ENCODE measurements at regions of chr18 and their contacts with region 1.

Region 1: DNA sequence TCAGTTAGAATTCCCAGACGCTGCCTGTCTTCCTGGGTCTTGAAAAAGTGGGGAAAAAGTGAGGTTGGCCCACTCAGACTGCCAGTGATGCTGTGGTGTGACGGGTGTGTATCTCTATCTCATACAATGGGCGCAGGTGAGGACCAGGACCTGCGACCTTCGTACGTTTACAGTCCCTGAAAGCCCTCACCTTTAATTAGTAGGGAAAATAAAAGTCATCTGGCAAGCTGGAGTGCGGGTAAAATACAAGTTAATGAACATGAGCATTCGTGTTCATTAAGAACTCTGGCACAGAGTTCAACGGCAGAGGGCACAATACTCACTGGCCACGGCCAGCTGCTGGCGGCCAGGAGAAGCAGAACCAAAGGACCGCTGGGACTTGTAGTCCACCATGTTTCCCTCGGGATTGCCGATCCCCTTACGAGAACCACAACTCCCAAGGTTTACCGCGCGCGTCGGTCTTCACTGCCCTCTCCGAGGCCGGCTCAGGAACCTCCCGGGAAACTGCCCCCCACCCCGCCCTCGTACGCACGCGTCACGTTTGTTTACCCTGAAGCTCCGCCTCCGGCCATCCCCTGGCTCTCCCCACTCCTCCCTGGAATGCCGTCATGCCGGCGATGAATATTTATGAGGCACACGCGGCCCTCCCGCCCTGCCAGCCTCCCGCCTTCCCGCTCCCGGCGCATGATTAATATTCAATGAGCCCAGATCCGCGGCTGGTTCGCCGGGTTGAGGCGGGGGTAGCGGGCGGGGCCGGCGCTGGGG is 488 bp upstream of the PHLPP1 start:
- DNase-seq: peak; percentile 100
- ATAC-seq: peak; percentile 91
- H3K4me3 ChIP-seq: peak overlapping the region; percentile 67; the same call in 1 of the 2 replicates
- H3K27ac ChIP-seq: peak overlapping the region; percentile 26; the same call in 1 of the 2 replicates
- H3K4me1 ChIP-seq: peaks cover 5% of the 10 kb centered on the region
- H3K27me3 ChIP-seq: no peaks in the 10 kb centered on the region
- CTCF ChIP-seq: peak; percentile 90
- POLR2A ChIP-seq: no peak; the same call in 1 of the 2 replicates
- RAD21 ChIP-seq: peak; percentile 92

Region 2: DNA sequence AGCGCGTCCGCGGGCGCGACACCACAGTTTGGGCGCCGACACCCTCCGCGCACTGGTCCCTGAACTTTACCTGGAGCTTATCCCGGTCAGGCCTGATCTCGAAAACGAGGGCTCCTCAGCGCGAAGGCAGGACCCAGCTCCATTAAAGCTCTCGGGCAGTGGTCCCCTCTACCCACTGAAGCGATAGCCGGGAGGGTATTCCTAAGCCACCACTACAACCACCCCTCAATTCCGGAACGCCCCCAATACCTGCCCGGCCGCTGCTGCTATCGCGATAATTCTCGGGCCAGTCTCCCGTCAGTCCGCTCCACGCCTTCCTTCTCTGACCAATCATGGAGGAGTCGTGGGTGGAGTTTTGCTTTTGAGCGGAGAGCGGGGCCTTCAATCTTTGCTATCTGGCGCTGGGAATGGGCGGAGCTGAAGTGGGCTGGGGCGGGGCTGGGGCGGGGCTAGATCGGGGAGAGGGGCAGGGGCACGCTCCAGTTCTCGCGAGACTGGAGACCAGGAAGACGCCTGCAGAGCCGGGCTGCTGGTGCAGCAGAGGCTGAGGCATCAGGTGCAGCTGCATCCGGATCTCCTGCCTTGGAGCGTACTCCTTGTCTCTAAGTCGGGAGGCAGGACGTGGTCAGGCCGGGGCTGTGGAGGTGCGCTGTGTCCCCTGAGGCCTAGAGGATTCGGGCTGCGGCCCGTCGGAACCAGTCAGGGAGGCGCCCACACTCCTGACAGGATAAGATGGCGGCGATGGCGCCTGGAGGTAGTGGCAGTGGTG is 527.9 kb before region 1 on chr18 and contains the starts of genes PIGN and RELCH:
- CTCF ChIA-PET with region 1: no interaction called
- POLR2A ChIA-PET with region 1: no interaction called
- dilution Hi-C with region 1: no loop called
- in situ Hi-C with region 1: loop called (anchors 25 kb)
- intact Hi-C with region 1: loop called (anchors 10 kb)
- DNase-seq: peak; percentile 98
- ATAC-seq: peak; percentile 95
- H3K4me3 ChIP-seq: peak within 1 kb of the TSS; percentile 96
- H3K27ac ChIP-seq: peak within 1 kb of the TSS; percentile 87
- H3K4me1 ChIP-seq: peaks cover 8% of the 10 kb centered on the region; the same call in 1 of the 2 replicates
- H3K27me3 ChIP-seq: no peaks in the 10 kb centered on the region
- CTCF ChIP-seq: no peak
- POLR2A ChIP-seq: peak; percentile 70
- RAD21 ChIP-seq: no peak
- total RNA-seq, gene PIGN: 17.9 and 42.2 TPM in 2 replicates
- total RNA-seq, gene RELCH: 45.5 and 52.5 TPM in 2 replicates

Region 3: GRCh38 chr18:62663731-62664336 is 51.0 kb before region 1 on chr18:
- CTCF ChIA-PET with region 1: no interaction called
- POLR2A ChIA-PET with region 1: no interaction called
- dilution Hi-C with region 1: no loop called
- in situ Hi-C with region 1: no loop called
- intact Hi-C with region 1: no loop called
- DNase-seq: peak; percentile 10
- ATAC-seq: no peak
- H3K4me3 ChIP-seq: no peak overlapping the region
- H3K27ac ChIP-seq: no peak overlapping the region
- H3K4me1 ChIP-seq: no peaks in the 10 kb centered on the region
- H3K27me3 ChIP-seq: no peaks in the 10 kb centered on the region; the same call in 1 of the 2 replicates
- CTCF ChIP-seq: no peak
- POLR2A ChIP-seq: no peak
- RAD21 ChIP-seq: no peak

Region 4: GRCh38 chr18:62751341-62751821 is 36.5 kb after region 1 on chr18:
- CTCF ChIA-PET with region 1: no interaction called
- POLR2A ChIA-PET with region 1: no interaction called
- dilution Hi-C with region 1: no loop called
- in situ Hi-C with region 1: no loop called
- intact Hi-C with region 1: no loop called
- DNase-seq: peak; percentile 25
- ATAC-seq: peak; percentile 59
- H3K4me3 ChIP-seq: no peak overlapping the region
- H3K27ac ChIP-seq: no peak overlapping the region
- H3K4me1 ChIP-seq: peaks cover 7% of the 10 kb centered on the region
- H3K27me3 ChIP-seq: no peaks in the 10 kb centered on the region
- CTCF ChIP-seq: no peak
- POLR2A ChIP-seq: no peak
- RAD21 ChIP-seq: no peak

Region 5: DNA sequence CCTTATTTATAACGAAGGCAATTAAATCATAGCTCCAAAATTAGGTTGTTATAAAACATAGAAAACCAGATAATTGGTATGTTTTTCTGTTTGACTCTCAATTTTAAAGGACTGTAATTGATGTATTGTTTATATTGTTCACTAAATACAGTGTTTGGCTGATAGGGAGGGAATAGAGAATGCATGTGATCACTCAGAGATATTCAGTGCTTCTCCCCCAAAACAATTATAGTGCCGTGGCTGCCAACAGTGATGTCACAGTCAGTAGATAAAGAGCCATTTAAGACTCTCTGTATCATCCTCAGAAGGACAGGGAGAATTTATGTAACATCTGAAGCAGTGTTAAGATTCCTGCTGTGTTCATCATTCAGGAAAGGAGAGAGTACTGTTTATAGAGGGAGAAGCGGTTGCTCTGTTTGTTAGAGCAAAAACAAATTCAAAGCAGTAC is 70.1 kb after region 1 on chr18:
- CTCF ChIA-PET with region 1: interaction called, 3 read pairs
- POLR2A ChIA-PET with region 1: no interaction called
- dilution Hi-C with region 1: no loop called
- in situ Hi-C with region 1: no loop called
- intact Hi-C with region 1: loop called (anchors 1 kb)
- DNase-seq: peak; percentile 84
- ATAC-seq: peak; percentile 77
- H3K4me3 ChIP-seq: no peak overlapping the region
- H3K27ac ChIP-seq: no peak overlapping the region
- H3K4me1 ChIP-seq: peaks cover 8% of the 10 kb centered on the region
- H3K27me3 ChIP-seq: no peaks in the 10 kb centered on the region
- CTCF ChIP-seq: no peak
- POLR2A ChIP-seq: no peak
- RAD21 ChIP-seq: no peak

Region 6: DNA sequence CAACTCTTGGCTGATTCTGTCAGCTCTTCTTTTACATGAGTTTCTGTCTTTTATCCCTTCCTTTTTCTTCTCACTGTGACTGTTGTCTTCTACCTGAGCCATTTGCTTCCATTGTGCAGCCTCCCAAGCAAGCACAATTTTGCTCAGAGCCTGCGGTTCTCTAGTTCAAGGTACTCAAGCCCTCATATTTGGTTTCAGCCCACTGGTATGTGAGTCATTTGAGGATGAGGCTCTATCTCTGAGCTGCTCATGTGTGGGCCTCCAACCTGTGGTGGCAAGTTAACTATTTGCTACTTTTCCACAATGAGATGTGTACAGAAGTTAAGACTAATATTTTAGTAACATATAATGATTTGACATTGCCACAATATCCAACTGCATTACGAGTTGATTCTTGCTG is 183.5 kb after region 1 on chr18:
- CTCF ChIA-PET with region 1: no interaction called
- POLR2A ChIA-PET with region 1: no interaction called
- dilution Hi-C with region 1: no loop called
- in situ Hi-C with region 1: no loop called
- intact Hi-C with region 1: loop called (anchors 5 kb)
- DNase-seq: no peak
- ATAC-seq: no peak
- H3K4me3 ChIP-seq: no peak overlapping the region
- H3K27ac ChIP-seq: no peak overlapping the region
- H3K4me1 ChIP-seq: peaks cover 18% of the 10 kb centered on the region
- H3K27me3 ChIP-seq: no peaks in the 10 kb centered on the region
- CTCF ChIP-seq: no peak
- POLR2A ChIP-seq: no peak
- RAD21 ChIP-seq: no peak

Region 7: DNA sequence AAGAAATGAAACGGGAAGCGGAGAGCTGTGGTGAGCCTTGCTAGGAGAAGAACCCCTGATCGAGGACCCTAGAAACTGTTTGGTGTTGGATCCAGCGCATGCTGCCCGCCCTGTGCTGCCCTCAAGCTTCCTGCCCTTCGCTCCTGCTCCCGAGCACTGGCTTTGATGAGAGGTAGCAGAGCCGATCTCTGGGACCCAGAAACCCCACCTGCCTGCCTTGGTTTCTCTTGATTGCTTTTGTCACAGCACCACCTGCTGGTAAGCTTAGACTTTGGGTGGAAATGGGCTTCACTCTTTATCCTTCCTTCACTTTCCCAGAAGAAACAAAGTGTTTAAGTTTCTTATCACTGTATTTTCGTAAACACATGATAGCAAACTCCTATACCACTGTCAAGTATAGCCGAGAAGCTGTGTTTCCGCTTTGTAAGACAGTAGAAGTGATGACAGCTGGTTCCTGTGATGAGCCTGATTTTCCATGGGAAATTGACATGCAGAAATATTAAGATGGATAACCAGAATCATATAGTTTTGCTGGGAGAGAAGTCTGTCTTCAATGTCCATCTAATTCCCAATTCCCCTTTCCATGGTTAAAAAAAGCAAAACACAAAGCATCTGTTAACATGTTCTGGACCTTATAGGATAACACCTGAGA is 267.9 kb after region 1 on chr18:
- CTCF ChIA-PET with region 1: interaction called, 10 read pairs
- POLR2A ChIA-PET with region 1: no interaction called
- dilution Hi-C with region 1: no loop called
- in situ Hi-C with region 1: loop called (anchors 5 kb)
- intact Hi-C with region 1: loop called (anchors 1 kb)
- DNase-seq: peak; percentile 63
- ATAC-seq: peak; percentile 63
- H3K4me3 ChIP-seq: no peak overlapping the region
- H3K27ac ChIP-seq: no peak overlapping the region
- H3K4me1 ChIP-seq: peaks cover 3% of the 10 kb centered on the region
- H3K27me3 ChIP-seq: peaks cover 6% of the 10 kb centered on the region
- CTCF ChIP-seq: peak; percentile 90
- POLR2A ChIP-seq: no peak
- RAD21 ChIP-seq: peak; percentile 92